Caco-2 (cell line): ENCODE measurements at regions of chr4 and their contacts with region 1.

Region 1: DNA sequence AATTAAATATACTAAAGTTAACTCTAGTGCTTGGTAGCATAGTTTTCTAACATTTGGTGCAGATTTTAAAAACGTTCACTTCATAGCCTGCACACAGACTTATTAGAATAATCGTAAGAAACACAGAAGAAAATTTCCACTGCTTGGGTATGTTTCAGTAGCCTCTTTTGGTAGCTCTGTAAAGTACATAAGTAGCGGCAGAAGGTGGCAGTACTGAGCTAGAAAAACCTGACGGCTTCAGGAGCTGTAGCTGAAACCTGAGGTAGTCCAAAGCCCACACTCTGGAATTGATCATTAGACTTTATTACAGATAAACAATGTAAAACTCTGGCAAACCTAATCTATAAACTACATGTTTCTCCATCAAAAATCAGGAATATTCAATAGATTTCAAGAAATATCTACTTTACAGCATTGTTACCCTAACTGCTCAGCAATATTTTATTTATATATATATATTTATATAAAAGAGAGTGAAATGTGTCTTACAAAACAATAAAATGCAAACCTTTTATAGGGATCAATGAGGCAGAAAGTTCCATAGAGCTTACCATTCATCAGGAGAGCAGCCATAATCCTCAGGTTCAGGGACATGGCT is 88.2 kb downstream of the ATP8A1 start:
- DNase-seq: peak; percentile 64 to 68
- H3K4me3 ChIP-seq: no peak overlapping the region
- H3K4me3 Mint-ChIP-seq: no peak overlapping the region
- H3K27ac Mint-ChIP-seq: no peak overlapping the region
- H3K4me1 ChIP-seq: no peaks in the 10 kb centered on the region; the same call in 1 of the 2 replicates
- H3K4me1 Mint-ChIP-seq: no peaks in the 10 kb centered on the region
- H3K27me3 ChIP-seq: no peaks in the 10 kb centered on the region
- H3K27me3 Mint-ChIP-seq: no peaks in the 10 kb centered on the region
- CTCF ChIP-seq: peak; percentile 65 to 67

Region 2: DNA sequence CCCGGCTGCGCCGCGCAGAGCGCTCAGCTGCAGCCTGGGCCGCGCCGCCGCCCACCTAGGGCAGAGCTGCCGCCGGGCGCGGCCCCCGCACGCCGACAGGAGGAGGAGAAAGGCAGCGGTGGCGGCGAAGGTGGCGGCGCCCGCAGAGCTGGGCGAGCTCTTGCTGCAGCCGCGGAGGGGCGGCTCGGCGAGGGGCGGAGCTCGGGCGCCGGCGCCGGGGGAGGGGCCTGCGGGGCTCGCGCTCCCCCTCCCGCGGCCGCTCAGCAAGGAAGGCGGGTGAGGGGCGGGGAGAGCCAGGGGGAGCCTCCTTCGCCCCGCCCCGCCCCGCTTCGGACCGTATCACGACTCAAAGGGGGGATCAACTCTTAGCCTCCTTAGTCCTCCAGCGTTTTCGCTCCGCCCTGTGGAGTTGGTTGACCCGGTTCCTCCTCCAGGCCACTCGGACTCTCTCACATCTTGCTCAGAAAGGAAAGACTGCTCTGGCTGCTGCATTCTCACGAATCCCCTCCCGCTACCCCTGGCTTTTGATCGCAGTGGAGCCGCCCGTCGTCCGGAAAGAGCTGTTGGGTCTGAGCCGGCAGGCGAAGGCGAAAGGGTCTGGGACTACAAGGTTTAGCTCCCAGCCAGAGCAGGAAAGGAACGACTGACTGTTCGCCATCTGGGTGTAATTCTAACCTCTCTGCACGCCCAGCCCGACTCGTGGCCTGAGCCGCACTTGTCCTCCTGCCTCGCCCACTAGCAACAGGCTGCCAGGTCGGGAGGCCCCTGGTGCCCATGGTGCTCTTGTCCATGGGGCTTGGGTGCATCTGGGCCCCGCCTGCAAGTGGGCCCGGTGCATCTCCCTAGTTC is 88.5 kb after region 1 on chr4 and contains the start of gene ATP8A1:
- CTCF ChIA-PET with region 1: interaction called, 15 read pairs
- POLR2A ChIA-PET with region 1: interaction called, 7 read pairs
- intact Hi-C with region 1: loop called (anchors 1 kb)
- DNase-seq: peak; percentile 87 to 92
- H3K4me3 ChIP-seq: peak within 1 kb of the TSS; percentile 89
- H3K4me3 Mint-ChIP-seq: peak within 1 kb of the TSS; percentile 76
- H3K27ac Mint-ChIP-seq: peak within 1 kb of the TSS; percentile 96
- H3K4me1 ChIP-seq: peaks cover 23% of the 10 kb centered on the region; the same call in 1 of the 2 replicates
- H3K4me1 Mint-ChIP-seq: peaks cover 28% of the 10 kb centered on the region
- H3K27me3 ChIP-seq: no peaks in the 10 kb centered on the region
- H3K27me3 Mint-ChIP-seq: no peaks in the 10 kb centered on the region
- CTCF ChIP-seq: no peak
- total RNA-seq, gene ATP8A1: 9.3 and 11.6 TPM in 2 replicates

Region 3: GRCh38 chr4:42750091-42750490 is 181.4 kb after region 1 on chr4:
- CTCF ChIA-PET with region 1: interaction called, 6 read pairs
- POLR2A ChIA-PET with region 1: no interaction called
- intact Hi-C with region 1: loop called (anchors 1 kb)
- DNase-seq: peak in 1 of 2 experiments; percentile 19
- H3K4me3 ChIP-seq: no peak overlapping the region
- H3K4me3 Mint-ChIP-seq: no peak overlapping the region
- H3K27ac Mint-ChIP-seq: no peak overlapping the region
- H3K4me1 ChIP-seq: no peaks in the 10 kb centered on the region
- H3K4me1 Mint-ChIP-seq: no peaks in the 10 kb centered on the region
- H3K27me3 ChIP-seq: no peaks in the 10 kb centered on the region
- H3K27me3 Mint-ChIP-seq: peaks cover 5% of the 10 kb centered on the region
- CTCF ChIP-seq: peak in 1 of 2 experiments; percentile 30

Region 4: DNA sequence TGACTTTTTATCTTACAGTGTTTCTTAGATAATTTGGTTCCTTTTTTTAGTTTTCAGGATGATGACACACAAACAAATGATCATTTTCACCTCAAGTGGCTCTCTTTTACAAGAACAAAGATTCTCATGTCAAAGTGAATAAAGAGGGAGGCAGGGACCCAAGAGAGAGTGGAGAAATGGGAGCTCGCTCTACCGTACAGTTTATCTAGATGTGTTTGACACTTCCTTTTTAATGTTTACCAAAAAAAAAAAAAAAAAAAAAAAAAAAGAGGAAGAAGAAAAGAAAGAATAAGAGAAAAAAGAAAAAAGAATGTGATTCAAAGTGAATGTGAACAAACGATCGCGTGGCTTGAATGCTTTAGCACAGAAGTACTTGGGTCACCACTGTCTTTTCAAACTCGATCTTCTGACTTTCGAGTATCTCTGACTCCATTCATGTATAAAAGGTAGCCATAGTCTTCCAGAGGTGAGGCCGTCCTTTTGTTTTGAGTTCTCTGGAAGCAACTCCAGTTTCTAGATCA is 248.2 kb after region 1 on chr4:
- CTCF ChIA-PET with region 1: interaction called, 4 read pairs
- POLR2A ChIA-PET with region 1: no interaction called
- intact Hi-C with region 1: loop called (anchors 1 kb)
- DNase-seq: no peak
- H3K4me3 ChIP-seq: no peak overlapping the region
- H3K4me3 Mint-ChIP-seq: no peak overlapping the region
- H3K27ac Mint-ChIP-seq: no peak overlapping the region
- H3K4me1 ChIP-seq: no peaks in the 10 kb centered on the region
- H3K4me1 Mint-ChIP-seq: no peaks in the 10 kb centered on the region
- H3K27me3 ChIP-seq: no peaks in the 10 kb centered on the region
- H3K27me3 Mint-ChIP-seq: peaks cover 10% of the 10 kb centered on the region
- CTCF ChIP-seq: no peak

Region 5: DNA sequence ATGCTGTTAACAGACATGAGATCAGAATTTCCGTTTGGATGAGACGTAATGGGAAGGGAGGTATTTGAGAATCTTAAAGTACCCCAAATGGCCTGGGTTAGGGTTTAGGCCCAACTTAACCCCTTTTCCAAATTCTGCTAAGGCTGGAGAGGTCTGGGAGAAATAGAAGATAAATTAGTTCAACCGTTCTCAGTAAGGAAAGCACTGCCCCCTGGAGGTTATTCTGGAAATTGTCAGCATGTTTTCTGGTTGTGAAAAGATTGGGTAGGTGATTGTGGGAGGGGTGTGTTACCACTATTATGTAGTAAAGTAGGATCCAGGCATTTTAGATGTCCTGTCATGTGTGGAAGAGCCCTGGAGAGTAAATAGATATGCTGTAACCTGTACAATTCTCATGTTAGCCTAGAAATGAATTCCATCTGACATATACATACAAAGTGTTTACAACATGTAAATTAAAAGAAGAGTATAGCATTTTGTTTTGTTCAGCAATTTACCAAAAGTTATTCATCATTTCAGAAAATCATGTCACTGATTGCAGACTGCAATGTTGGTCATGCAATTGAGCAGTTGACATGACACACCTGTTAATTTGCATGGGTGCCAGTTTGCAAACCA is 297.0 kb after region 1 on chr4:
- CTCF ChIA-PET with region 1: no interaction called
- POLR2A ChIA-PET with region 1: no interaction called
- intact Hi-C with region 1: loop called (anchors 1 kb)
- DNase-seq: peak; percentile 42 to 66
- H3K4me3 ChIP-seq: no peak overlapping the region
- H3K4me3 Mint-ChIP-seq: no peak overlapping the region
- H3K27ac Mint-ChIP-seq: no peak overlapping the region
- H3K4me1 ChIP-seq: no peaks in the 10 kb centered on the region
- H3K4me1 Mint-ChIP-seq: no peaks in the 10 kb centered on the region
- H3K27me3 ChIP-seq: no peaks in the 10 kb centered on the region
- H3K27me3 Mint-ChIP-seq: peaks cover 4% of the 10 kb centered on the region
- CTCF ChIP-seq: peak; percentile 60 to 66